Activated CD4-positive, alpha-beta T cell treated with anti-CD3 and anti-CD28 coated beads, Interleukin-2, amount 10 ng/mL, durations not matched to agents 7 days and 5 days (primary cell): ENCODE measurements at regions of chr1 and their contacts with region 1.

Region 1: DNA sequence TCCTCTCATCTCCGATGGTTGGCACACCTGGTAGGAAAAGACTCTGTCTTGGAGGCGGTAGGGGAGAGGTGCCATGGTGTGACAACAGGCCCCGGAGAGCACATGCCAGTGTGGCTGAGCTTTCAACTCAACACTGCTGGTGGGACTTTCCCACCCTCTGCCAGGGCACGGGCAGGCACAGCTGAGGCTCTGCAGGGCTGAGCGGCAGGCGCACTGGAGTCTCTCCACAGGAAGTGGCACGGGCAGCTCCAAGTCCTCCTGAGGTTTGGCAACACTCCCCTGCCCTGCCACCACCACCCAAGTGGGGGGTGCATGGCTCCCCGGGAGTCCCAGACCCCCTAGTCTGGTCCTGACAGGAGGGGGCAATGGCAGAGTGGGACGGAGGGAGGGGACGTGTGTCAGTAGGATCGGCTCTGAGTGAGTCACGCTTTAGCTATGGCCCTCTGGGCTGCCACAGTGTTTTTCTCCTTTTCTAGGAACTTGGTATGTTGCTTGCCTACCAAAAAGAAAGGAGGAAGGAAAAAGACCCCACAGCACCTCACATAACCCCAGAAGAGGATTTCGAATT is 27.3 kb upstream of the EVA1B start:
- DNase-seq: peak; percentile 55
- H3K4me3 Mint-ChIP-seq: no peak overlapping the region
- H3K27ac Mint-ChIP-seq: peak overlapping the region; percentile 92
- H3K4me1 Mint-ChIP-seq: peaks cover 35% of the 10 kb centered on the region
- H3K27me3 Mint-ChIP-seq: no peaks in the 10 kb centered on the region

Region 2: GRCh38 chr1:36369061-36369861 is 18.5 kb after region 1 on chr1:
- CTCF ChIA-PET with region 1: interaction called, 42 read pairs
- POLR2A ChIA-PET with region 1: interaction called, 3 read pairs
- DNase-seq: peak; percentile 88
- H3K4me3 Mint-ChIP-seq: no peak overlapping the region
- H3K27ac Mint-ChIP-seq: peak overlapping the region; percentile 52
- H3K4me1 Mint-ChIP-seq: peaks cover 76% of the 10 kb centered on the region
- H3K27me3 Mint-ChIP-seq: no peaks in the 10 kb centered on the region